AG04450 (cell line): ENCODE measurements at regions of chr10 and their contacts with region 1.

Region 1: DNA sequence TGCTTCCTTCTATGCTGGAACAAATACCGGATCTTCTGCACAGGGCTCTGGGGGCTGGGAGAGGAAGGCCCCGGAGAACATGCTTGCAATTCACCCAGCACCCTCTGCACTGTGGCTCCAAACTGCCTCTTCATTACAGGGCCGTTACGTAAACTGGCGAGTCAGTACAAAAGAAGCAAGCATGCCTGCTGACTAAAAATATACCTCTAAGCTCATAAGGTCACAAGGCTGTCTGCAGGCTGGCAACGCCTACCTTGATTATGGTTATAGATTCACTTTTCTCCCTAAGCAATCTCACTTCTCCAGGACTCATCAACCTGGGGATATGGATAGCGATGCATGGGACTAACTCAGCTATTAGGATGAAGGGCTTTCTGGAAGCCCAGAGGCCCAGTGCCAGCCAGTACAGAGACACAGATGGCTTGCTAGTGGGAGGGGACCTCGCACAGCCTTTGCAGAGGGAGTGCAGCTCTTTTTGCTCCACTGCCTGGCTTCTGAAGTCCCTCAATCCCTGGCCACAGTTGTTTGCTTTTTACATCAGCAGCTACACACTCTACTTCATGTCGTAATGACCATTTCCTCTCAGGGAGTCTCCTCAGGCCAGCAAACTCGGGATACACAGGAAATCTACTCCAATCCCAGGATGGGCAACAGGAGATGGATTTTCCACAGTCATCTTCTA is 96.1 kb downstream of the SH3PXD2A start:
- DNase-seq: peak; percentile 61
- H3K4me3 ChIP-seq: no peak overlapping the region
- H3K27ac ChIP-seq: peak overlapping the region; percentile 96
- H3K27me3 ChIP-seq: no peaks in the 10 kb centered on the region
- CTCF ChIP-seq: no peak

Region 2: DNA sequence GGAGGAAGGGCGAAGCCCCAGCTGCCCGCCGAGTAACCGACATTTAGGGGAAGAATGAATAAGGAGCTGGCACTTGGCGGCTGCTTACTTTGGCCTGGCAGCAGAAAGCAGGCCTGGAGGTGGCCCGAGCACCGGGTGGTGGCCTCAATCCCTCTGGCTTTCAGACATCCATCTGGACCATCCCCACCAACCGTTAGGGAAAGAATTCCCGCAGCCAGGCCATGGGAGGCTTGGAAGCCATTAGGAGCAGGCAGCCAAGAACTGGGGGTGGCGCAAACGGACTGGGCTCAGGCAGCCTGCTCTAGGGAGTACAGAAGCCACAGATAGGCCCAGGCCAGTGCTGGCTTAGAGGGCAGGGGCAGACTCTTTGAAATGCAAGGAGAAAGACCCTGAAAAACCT is 133.1 kb before region 1 on chr10:
- CTCF ChIA-PET with region 1: no interaction called
- POLR2A ChIA-PET with region 1: no interaction called
- DNase-seq: no peak
- H3K4me3 ChIP-seq: no peak overlapping the region
- H3K27ac ChIP-seq: no peak overlapping the region
- H3K27me3 ChIP-seq: no peaks in the 10 kb centered on the region
- CTCF ChIP-seq: no peak

Region 3: GRCh38 chr10:103772096-103772845 is 13.0 kb after region 1 on chr10:
- CTCF ChIA-PET with region 1: interaction called, 3 read pairs
- POLR2A ChIA-PET with region 1: interaction called, 24 read pairs
- DNase-seq: peak; percentile 99
- H3K4me3 ChIP-seq: peak overlapping the region; percentile 43
- H3K27ac ChIP-seq: peak overlapping the region; percentile 53
- H3K27me3 ChIP-seq: no peaks in the 10 kb centered on the region
- CTCF ChIP-seq: no peak

Region 4: GRCh38 chr10:103781329-103782061 is 22.3 kb after region 1 on chr10:
- CTCF ChIA-PET with region 1: interaction called, 7 read pairs
- POLR2A ChIA-PET with region 1: interaction called, 13 read pairs
- DNase-seq: peak; percentile 94
- H3K4me3 ChIP-seq: no peak overlapping the region
- H3K27ac ChIP-seq: peak overlapping the region; percentile 91
- H3K27me3 ChIP-seq: no peaks in the 10 kb centered on the region
- CTCF ChIP-seq: peak; percentile 69